Left colon (tissue), 2 donors: ENCODE measurements at regions of chr12 and their contacts with region 1.

Region 1: GRCh38 chr12:118404876-118405521 is 28.6 kb downstream of the SUDS3 start:
- DNase-seq: peak; percentile 33 to 79
- ATAC-seq: peak; percentile 63

Region 2: GRCh38 chr12:118544569-118544968 is 139.6 kb after region 1 on chr12:
- intact Hi-C with region 1: no loop called
- DNase-seq: no peak
- ATAC-seq: no peak

Region 3: DNA sequence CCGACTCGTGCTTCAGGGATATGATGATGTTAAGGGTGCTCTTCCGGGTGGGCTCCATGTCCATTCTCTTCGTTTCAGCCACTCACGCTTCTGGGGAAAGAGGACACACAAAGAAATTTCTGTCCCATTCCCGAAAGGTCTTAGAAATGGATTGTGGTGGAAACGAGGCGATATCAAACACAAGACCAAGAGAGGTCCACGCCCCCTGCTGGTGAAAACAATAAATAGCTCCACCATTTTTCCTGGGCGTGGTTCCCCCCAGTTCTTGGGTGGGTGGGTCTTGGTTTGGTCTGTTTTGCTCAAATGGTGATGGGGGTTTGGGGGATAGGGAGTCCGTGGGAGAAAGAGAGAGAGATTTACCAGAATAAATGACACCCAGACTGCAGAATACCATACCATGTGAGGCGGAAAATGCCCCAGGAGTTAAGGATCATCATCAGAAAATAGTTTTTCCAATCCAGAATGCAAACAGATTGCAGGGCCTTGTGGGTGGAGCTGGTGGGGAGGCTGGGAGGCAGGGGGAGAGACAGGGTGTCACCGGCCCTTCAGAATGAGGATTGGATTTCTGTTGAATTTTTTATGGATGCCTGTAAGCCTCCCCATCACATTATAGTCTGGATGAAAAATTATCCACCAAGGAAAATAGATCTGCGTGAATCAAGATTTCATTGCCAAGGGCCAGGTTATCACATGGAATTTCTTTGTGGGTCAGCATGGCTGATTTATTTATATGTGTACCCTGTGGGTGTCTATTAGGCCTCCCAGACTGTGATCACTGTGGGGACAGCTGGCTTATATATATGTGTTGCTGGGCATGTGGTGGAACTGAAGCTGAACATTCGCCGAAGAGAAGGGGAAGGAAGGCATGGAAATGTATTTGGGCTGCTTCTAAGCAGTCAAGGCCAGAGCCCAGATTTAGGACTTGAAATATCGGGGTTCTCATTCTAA is 632.2 kb after region 1 on chr12:
- intact Hi-C with region 1: loop called in 1 of 2 experiments (anchors 10 kb)
- DNase-seq: peak in 1 of 2 donors; percentile 11
- ATAC-seq: no peak

Region 4: GRCh38 chr12:119544765-119545625 is 1140.0 kb after region 1 on chr12:
- intact Hi-C with region 1: loop called in 1 of 2 experiments (anchors 10 kb)
- DNase-seq: peak in 1 of 2 donors; percentile 51
- ATAC-seq: no peak